HCT116 (cell line): ENCODE measurements at regions of chr1 and their contacts with region 1.

Region 1: DNA sequence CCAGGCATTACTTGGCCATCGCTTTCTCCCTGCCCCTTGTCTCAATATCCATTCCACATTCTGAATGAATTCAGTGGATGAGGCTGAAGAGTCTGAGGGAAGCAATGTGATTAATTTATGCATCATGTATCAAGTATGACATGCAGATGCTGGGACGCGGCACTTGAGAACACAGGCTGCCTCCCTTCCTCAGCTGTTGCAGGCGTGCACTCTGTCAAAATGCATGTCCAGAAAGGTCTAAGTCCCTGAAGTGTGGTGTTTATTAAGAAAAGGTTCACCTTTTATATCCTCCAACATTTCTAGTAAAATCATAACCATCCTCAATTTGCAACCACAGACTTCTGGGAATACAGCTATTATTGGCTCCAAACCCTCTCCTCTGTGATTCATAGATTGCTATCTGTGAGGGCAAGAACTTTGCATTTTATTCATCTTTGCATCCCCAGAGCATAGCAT is 22.6 kb upstream of the RAB3GAP2 start:
- DNase-seq: no peak
- ATAC-seq: no peak
- H3K4me3 ChIP-seq: no peak overlapping the region
- H3K27ac ChIP-seq: no peak overlapping the region
- H3K4me1 ChIP-seq: no peaks in the 10 kb centered on the region
- H3K27me3 ChIP-seq: no peaks in the 10 kb centered on the region
- CTCF ChIP-seq: no peak
- POLR2A ChIP-seq: no peak
- RAD21 ChIP-seq: no peak

Region 2: DNA sequence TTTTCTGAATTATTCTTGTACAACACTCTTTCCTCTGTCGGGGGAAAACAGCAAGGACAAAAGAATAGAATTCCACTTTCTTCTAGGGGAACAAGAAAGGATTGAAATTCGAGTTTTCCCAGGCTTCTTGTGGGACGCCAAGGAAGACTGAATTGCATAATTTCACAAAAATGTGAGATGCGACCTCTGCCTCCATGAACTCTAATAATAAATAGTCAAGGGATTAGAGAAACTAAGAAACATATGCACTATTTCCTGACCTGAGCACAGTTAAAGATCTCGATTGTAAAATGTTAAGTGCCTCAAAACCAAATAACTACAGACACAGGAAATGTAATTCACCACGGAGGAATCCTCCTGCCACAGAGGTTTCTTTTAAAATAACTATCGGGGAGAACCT is 115.7 kb after region 1 on chr1:
- CTCF ChIA-PET with region 1: no interaction called
- POLR2A ChIA-PET with region 1: no interaction called
- RAD21 ChIA-PET with region 1: no interaction called
- intact Hi-C with region 1: no loop called
- DNase-seq: no peak
- ATAC-seq: no peak
- H3K4me3 ChIP-seq: no peak overlapping the region
- H3K27ac ChIP-seq: no peak overlapping the region
- H3K4me1 ChIP-seq: no peaks in the 10 kb centered on the region
- H3K27me3 ChIP-seq: no peaks in the 10 kb centered on the region
- CTCF ChIP-seq: no peak
- POLR2A ChIP-seq: no peak
- RAD21 ChIP-seq: no peak

Region 3: GRCh38 chr1:220500372-220500771 is 205.5 kb after region 1 on chr1:
- CTCF ChIA-PET with region 1: no interaction called
- POLR2A ChIA-PET with region 1: no interaction called
- RAD21 ChIA-PET with region 1: no interaction called
- intact Hi-C with region 1: no loop called
- DNase-seq: no peak
- ATAC-seq: no peak
- H3K4me3 ChIP-seq: no peak overlapping the region
- H3K27ac ChIP-seq: no peak overlapping the region
- H3K4me1 ChIP-seq: no peaks in the 10 kb centered on the region
- H3K27me3 ChIP-seq: no peaks in the 10 kb centered on the region
- CTCF ChIP-seq: no peak
- POLR2A ChIP-seq: no peak
- RAD21 ChIP-seq: no peak

Region 4: DNA sequence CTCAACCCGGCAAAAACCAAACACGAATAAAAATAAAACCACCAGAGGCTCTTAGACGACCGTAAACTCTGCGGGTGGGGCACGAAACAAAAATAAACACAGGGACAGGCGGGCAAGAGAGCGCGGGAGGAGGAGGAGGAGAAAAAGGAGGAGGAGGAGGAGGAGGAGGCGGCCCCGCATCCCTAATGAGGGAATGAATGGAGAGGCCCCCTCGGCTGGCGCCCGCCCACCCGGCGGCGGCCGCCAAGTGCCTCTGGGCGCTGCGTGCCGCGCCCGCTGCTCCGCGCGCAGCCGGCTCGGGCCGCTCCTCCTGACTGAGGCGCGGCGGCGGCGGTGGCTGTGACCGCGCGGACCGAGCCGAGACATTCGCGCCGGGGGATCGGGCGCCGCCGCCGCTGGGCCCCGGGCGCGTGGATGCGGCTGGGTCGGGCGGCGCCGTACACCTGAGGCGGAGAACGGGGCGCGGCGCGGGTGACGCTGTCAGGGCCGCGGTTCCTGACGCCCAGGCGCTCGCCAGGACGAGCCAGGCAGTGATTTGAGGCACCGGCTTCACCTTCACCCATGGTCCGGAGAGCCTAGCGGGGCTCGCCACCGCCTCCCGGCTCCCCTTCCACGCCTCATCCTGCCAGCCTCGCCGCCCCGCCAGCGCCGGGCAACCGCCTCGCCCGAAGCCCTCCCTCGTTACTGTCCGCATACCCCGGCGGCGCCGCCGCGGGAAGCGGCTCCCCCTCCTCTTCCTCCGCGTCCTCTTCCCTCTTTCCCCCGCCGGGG is 233.2 kb after region 1 on chr1 and contains the start of gene MARK1:
- CTCF ChIA-PET with region 1: no interaction called
- POLR2A ChIA-PET with region 1: no interaction called
- RAD21 ChIA-PET with region 1: no interaction called
- intact Hi-C with region 1: loop called (anchors 5 kb)
- DNase-seq: no peak
- ATAC-seq: peak; percentile 84
- H3K4me3 ChIP-seq: peak within 1 kb of the TSS; percentile 58 to 71
- H3K27ac ChIP-seq: peak within 1 kb of the TSS; percentile 57
- H3K4me1 ChIP-seq: peaks cover 0 to 22% of the 10 kb centered on the region in 2 experiments; a peak in 1 of 4 replicates
- H3K27me3 ChIP-seq: no peaks in the 10 kb centered on the region
- CTCF ChIP-seq: no peak
- POLR2A ChIP-seq: no peak
- RAD21 ChIP-seq: no peak
- total RNA-seq, gene MARK1: 3.6 TPM

Region 5: GRCh38 chr1:220680085-220680687 is 385.3 kb after region 1 on chr1:
- CTCF ChIA-PET with region 1: no interaction called
- POLR2A ChIA-PET with region 1: no interaction called
- RAD21 ChIA-PET with region 1: no interaction called
- intact Hi-C with region 1: loop called (anchors 5 kb)
- DNase-seq: peak; percentile 43
- ATAC-seq: peak; percentile 93
- H3K4me3 ChIP-seq: no peak overlapping the region
- H3K27ac ChIP-seq: no peak overlapping the region
- H3K4me1 ChIP-seq: no peaks in the 10 kb centered on the region
- H3K27me3 ChIP-seq: no peaks in the 10 kb centered on the region
- CTCF ChIP-seq: peak; percentile 63 to 75 (median 72)
- POLR2A ChIP-seq: no peak
- RAD21 ChIP-seq: peak; percentile 75